ENCODE measurements at regions of chr17 and their contacts with region 1.

Region 1: GRCh38 chr17:65278050-65278819 is 141.1 kb downstream of the RGS9 start:
- DNase-seq: peak; percentile 73 to 87
- ATAC-seq: peak; percentile 97 to 99
- H3K4me3 ChIP-seq: no peak overlapping the region
- H3K27ac ChIP-seq: no peak overlapping the region
- H3K4me1 ChIP-seq: no peaks in the 10 kb centered on the region
- CTCF ChIP-seq: peak; percentile 71
- EP300 ChIP-seq: no peak
- POLR2A ChIP-seq: peak; percentile 13; the same call in 1 of the 2 replicates
- RAD21 ChIP-seq: peak; percentile 90 to 92

Region 2: DNA sequence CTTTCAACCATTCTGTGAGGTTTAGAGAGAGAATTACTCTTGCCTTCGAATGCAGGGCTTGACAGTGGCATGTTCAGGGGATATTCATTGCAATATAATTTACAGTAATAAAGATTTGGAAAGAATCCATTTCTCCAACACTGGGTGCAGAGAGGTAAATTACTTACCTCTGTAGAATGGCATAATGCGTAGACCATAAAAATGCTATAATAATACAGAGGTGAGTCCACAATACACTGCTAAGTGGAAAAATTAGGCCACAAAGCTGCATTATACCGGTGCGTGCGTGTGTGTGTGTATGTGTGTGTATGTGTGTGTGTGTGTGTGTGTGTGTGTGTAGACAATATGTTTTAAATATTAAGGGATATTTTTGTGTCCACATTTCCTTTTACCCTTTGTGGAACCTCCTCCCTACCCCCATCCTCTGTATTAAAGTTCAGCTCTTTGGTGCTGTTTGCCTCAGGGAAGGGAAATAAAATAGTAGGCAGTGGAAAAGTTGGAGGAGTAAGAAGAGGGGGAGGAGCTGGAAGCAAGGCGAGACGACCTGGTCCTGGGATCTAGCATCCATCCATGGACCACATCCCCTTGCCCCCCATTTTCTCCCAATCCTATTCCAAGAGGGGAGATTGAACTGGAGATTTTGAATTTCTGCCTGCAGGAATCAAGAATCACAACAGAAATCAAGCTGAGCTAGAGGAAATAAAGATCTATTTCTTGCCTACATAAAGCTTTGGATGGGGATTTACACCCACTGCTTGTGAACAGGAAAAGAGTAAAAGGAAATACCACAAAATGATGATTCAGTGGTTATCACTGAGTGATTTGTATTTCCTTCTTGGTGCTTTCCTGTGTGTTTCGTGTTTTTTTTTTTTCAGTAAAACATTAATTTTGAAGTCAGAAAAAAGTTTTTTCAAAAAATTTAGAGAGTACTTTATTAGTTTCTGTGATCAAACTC is 16.3 kb before region 1 on chr17:
- CTCF ChIA-PET with region 1: interaction called, 17 read pairs
- POLR2A ChIA-PET with region 1: no interaction called
- DNase-seq: no peak
- ATAC-seq: no peak
- H3K4me3 ChIP-seq: no peak overlapping the region
- H3K27ac ChIP-seq: no peak overlapping the region
- H3K4me1 ChIP-seq: no peaks in the 10 kb centered on the region
- CTCF ChIP-seq: no peak
- EP300 ChIP-seq: no peak
- POLR2A ChIP-seq: no peak
- RAD21 ChIP-seq: no peak

Region 3: GRCh38 chr17:65345261-65346005 is 67.2 kb after region 1 on chr17:
- CTCF ChIA-PET with region 1: no interaction called
- POLR2A ChIA-PET with region 1: no interaction called
- DNase-seq: no peak
- ATAC-seq: no peak
- H3K4me3 ChIP-seq: no peak overlapping the region
- H3K27ac ChIP-seq: no peak overlapping the region
- H3K4me1 ChIP-seq: no peaks in the 10 kb centered on the region
- CTCF ChIP-seq: no peak
- EP300 ChIP-seq: no peak
- POLR2A ChIP-seq: no peak
- RAD21 ChIP-seq: no peak

Measured in A549 (cell line).